ENCODE measurements at regions of chr1 and their contacts with region 1.

Region 1: GRCh38 chr1:40862008-40862863 is at the start of gene CITED4:
- DNase-seq: peak; percentile 98
- H3K4me3 ChIP-seq: peak within 1 kb of the TSS; percentile 48 to 90 (median 82)
- H3K27ac ChIP-seq: peak within 1 kb of the TSS; percentile 85 to 98 (median 90)
- H3K4me1 ChIP-seq: peaks cover 0 to 56% (median 48%) of the 10 kb centered on the region in 4 donors
- H3K27me3 ChIP-seq: no peaks in the 10 kb centered on the region
- CTCF ChIP-seq: peak in 1 of 4 experiments; percentile 15
- EP300 ChIP-seq: no peak
- POLR2A ChIP-seq: peak; percentile 90 to 95
- total RNA-seq, gene CITED4: 22.7 to 59.8 (median 36.9) TPM

Region 2: DNA sequence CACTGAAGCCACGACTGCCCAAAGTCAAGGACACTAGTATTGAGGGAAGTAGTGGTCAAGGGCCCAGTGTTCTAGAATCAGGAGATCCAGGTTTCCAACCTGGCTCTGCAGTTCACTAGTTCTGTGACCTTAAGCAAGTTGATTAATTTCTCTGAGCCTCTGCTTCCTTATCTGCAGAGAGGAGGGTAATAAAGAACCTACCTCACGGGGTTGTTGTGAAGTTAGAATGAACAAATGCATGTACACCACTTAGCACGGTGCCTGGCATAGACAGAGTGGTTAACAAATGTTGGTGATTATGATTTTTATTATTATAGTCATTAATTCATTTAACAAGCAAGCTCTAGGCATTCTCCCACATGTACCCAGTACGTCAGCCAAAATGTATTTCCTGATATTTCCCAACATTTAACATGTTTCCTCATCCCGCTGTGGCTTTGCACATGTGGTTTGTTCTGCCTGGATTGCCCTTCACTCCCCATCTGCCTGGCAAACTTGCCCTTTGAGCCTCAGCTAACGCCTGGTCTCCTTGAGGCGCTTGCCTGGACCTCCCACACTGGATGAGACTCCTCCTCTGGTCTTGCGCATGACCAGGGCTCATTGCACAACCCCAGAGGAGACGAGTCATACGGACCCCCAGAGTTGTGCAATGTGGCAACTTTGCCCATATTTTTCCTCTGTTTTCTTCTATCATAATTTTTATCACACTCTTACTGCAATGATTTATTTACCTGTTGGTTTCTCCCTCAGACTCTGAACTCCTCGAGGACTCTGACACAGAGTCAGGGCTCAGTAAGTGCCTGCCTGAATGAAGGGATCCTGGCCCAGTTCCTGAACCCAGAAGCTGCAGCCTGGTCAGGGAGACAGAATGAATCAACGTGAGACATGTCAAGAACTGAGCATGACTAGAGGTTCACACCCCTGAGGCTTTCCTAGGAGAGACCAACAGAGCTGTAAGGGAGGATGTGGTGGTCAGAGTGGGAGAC is 928.0 kb before region 1 on chr1:
- intact Hi-C with region 1: no loop called
- DNase-seq: peak; percentile 91
- H3K4me3 ChIP-seq: no peak overlapping the region
- H3K27ac ChIP-seq: peak overlapping the region; percentile 42 to 55 (median 50)
- H3K4me1 ChIP-seq: no peaks in the 10 kb centered on the region
- H3K27me3 ChIP-seq: no peaks in the 10 kb centered on the region
- CTCF ChIP-seq: no peak
- EP300 ChIP-seq: no peak
- POLR2A ChIP-seq: no peak

Region 3: GRCh38 chr1:40898431-40898901 is 36.2 kb after region 1 on chr1:
- intact Hi-C with region 1: no loop called
- DNase-seq: no peak
- H3K4me3 ChIP-seq: no peak overlapping the region
- H3K27ac ChIP-seq: no peak overlapping the region
- H3K4me1 ChIP-seq: peaks cover 0 to 17% (median 14%) of the 10 kb centered on the region in 4 donors
- H3K27me3 ChIP-seq: no peaks in the 10 kb centered on the region
- CTCF ChIP-seq: no peak
- EP300 ChIP-seq: no peak
- POLR2A ChIP-seq: no peak

Region 4: GRCh38 chr1:40944841-40945430 is 82.7 kb after region 1 on chr1:
- intact Hi-C with region 1: loop called (anchors 1 kb)
- DNase-seq: peak; percentile 86
- H3K4me3 ChIP-seq: no peak overlapping the region
- H3K27ac ChIP-seq: peak overlapping the region; percentile 84 to 94 (median 88)
- H3K4me1 ChIP-seq: peaks cover 0 to 67% (median 47%) of the 10 kb centered on the region in 4 donors
- H3K27me3 ChIP-seq: no peaks in the 10 kb centered on the region
- CTCF ChIP-seq: no peak
- EP300 ChIP-seq: peak; percentile 86 to 98 (median 96)
- POLR2A ChIP-seq: no peak

Measured in sigmoid colon (tissue), 7 donors.